SK-N-SH (cell line): ENCODE measurements at regions of chr9 and their contacts with region 1.

Region 1: GRCh38 chr9:13427587-13427986 is 148.1 kb upstream of the MPDZ start:
- DNase-seq: peak; percentile 30
- H3K4me3 ChIP-seq: no peak overlapping the region; a peak in 2 of 4 replicates
- H3K27ac ChIP-seq: peak overlapping the region in 1 of 2 experiments; percentile 34; a peak in 2 of 4 replicates
- H3K4me1 ChIP-seq: no peaks in the 10 kb centered on the region; a peak in 2 of 4 replicates
- H3K27me3 ChIP-seq: no peaks in the 10 kb centered on the region
- CTCF ChIP-seq: peak; percentile 87
- EP300 ChIP-seq: no peak
- RAD21 ChIP-seq: peak; percentile 88

Region 2: DNA sequence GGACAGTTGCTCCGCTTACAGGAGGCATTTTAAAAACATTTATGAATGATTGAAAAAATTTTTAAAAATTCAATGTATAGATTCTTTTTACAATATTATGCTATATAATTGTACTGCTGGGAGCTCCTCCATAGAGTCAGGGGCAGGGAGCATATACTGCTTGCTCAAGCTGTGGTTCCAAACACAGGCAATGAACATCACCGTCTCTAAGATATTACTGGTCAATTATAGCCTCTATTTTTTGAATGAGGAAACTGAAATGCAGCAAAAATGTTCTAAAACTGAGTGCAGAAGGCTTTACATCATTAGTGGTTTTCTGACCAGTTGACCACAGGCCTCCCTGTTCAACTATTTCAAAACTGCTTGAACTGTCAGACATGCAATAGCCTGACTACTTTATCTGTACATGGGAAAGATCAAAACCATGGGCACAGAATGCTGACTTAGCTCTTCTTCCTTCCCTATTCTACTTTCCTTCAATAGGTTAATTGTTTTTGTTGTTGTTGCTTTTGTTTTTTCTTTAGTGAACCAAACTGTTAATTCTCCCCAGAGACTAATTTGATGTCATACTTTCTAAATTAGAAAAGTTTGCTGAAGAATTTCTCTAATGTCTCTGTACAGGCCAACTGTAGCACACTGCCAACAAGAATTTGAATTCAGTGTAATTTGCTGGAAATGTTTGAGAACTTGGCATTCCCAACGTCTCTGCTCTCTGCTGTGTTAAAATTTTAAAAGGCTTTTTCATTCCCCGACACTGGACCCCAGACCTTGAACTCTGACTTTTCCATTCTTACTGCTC is 40.5 kb before region 1 on chr9:
- CTCF ChIA-PET with region 1: no interaction called
- POLR2A ChIA-PET with region 1: no interaction called
- DNase-seq: no peak
- H3K4me3 ChIP-seq: no peak overlapping the region
- H3K27ac ChIP-seq: peak overlapping the region; percentile 23 to 35; a peak in 3 of 4 replicates
- H3K4me1 ChIP-seq: peaks cover 0 to 8% of the 10 kb centered on the region in 2 experiments; a peak in 1 of 4 replicates
- H3K27me3 ChIP-seq: no peaks in the 10 kb centered on the region
- CTCF ChIP-seq: no peak
- EP300 ChIP-seq: no peak
- RAD21 ChIP-seq: no peak

Region 3: GRCh38 chr9:13412331-13412730 is 15.3 kb before region 1 on chr9:
- CTCF ChIA-PET with region 1: interaction called, 11 read pairs
- POLR2A ChIA-PET with region 1: no interaction called
- DNase-seq: no peak
- H3K4me3 ChIP-seq: no peak overlapping the region
- H3K27ac ChIP-seq: peak overlapping the region in 1 of 2 experiments; percentile 43; a peak in 1 of 4 replicates
- H3K4me1 ChIP-seq: peaks cover 0 to 2% of the 10 kb centered on the region in 2 experiments; a peak in 2 of 4 replicates
- H3K27me3 ChIP-seq: no peaks in the 10 kb centered on the region
- CTCF ChIP-seq: no peak
- EP300 ChIP-seq: no peak
- RAD21 ChIP-seq: no peak

Region 4: GRCh38 chr9:13688994-13689600 is 261.5 kb after region 1 on chr9:
- CTCF ChIA-PET with region 1: interaction called, 12 read pairs
- POLR2A ChIA-PET with region 1: no interaction called
- DNase-seq: no peak
- H3K4me3 ChIP-seq: no peak overlapping the region
- H3K27ac ChIP-seq: no peak overlapping the region
- H3K4me1 ChIP-seq: no peaks in the 10 kb centered on the region
- H3K27me3 ChIP-seq: no peaks in the 10 kb centered on the region
- CTCF ChIP-seq: peak; percentile 40
- EP300 ChIP-seq: no peak
- RAD21 ChIP-seq: peak; percentile 53

Region 5: GRCh38 chr9:14428781-14429230 is 1001.2 kb after region 1 on chr9:
- CTCF ChIA-PET with region 1: interaction called, 30 read pairs
- POLR2A ChIA-PET with region 1: no interaction called
- DNase-seq: peak; percentile 53
- H3K4me3 ChIP-seq: no peak overlapping the region; a peak in 1 of 4 replicates
- H3K27ac ChIP-seq: peak overlapping the region in 1 of 2 experiments; percentile 18; a peak in 1 of 4 replicates
- H3K4me1 ChIP-seq: peaks cover 7 to 15% of the 10 kb centered on the region in 2 experiments; a peak in 3 of 4 replicates
- H3K27me3 ChIP-seq: no peaks in the 10 kb centered on the region
- CTCF ChIP-seq: peak; percentile 91
- EP300 ChIP-seq: no peak
- RAD21 ChIP-seq: peak; percentile 76